Heart left ventricle (tissue), 16 donors: ENCODE measurements at regions of chr10 and their contacts with region 1.

Region 1: GRCh38 chr10:86936661-86937501 is 20.5 kb downstream of the MMRN2 start:
- DNase-seq: no peak
- ATAC-seq: no peak
- H3K4me3 ChIP-seq: no peak overlapping the region
- H3K27ac ChIP-seq: no peak overlapping the region
- H3K4me1 ChIP-seq: peaks cover 0 to 21% (median 0%) of the 10 kb centered on the region in 12 donors
- H3K27me3 ChIP-seq: no peaks in the 10 kb centered on the region
- CTCF ChIP-seq: no peak
- POLR2A ChIP-seq: no peak

Region 2: DNA sequence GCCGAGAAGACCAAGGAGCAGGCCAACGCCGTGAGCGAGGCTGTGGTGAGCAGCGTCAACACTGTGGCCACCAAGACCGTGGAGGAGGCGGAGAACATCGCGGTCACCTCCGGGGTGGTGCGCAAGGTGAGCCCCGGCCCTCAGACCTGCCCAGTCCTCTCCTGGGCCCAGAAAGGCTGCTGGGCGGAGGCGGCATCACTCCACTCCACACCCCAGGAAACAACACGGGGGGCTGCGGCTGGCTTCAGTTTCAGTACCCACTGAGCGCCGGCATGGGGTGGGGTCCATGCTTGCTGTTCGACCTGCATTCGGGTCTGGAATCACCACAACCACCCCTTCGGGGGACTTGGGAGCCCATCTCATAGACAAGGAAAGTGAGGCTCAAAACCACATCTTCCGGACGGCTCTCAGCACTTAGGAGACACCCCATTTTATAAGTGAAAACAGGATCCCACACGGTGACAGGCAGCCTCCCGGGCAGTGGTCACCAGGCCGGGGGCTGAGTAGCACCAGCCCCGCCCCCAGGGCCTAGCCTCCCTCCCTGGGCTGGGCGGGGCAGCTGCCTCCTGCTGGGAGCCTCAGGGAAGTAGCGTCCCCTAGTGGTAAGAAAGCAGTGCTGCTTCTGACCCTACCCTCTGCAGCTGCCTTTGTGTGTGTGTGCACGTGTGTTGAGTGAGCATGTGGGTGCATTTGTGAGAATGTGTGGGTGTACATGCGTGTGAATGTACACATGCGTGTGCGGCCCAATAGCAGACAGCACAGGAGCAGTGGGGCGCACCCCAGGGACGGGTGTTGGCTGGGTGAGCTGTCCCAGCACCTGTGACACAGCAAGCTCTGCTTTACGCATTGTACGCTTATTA is 23.4 kb after region 1 on chr10:
- intact Hi-C with region 1: loop called in 3 of 10 experiments (anchors 1 to 2 kb)
- DNase-seq: peak; percentile 60 to 70 (median 63)
- ATAC-seq: peak; percentile 17 to 66 (median 50)
- H3K4me3 ChIP-seq: peak overlapping the region in 11 of 12 donors; percentile 0 to 66 (median 58)
- H3K27ac ChIP-seq: peak overlapping the region; percentile 75 to 98 (median 90)
- H3K4me1 ChIP-seq: peaks cover 4 to 48% (median 36%) of the 10 kb centered on the region in 12 donors
- H3K27me3 ChIP-seq: no peaks in the 10 kb centered on the region
- CTCF ChIP-seq: peak; percentile 88 to 95 (median 92)
- POLR2A ChIP-seq: no peak

Region 3: GRCh38 chr10:86965986-86966654 is 29.2 kb after region 1 on chr10:
- intact Hi-C with region 1: loop called in 4 of 10 experiments (anchors 2 to 5 kb)
- DNase-seq: no peak
- ATAC-seq: no peak
- H3K4me3 ChIP-seq: peak overlapping the region in 7 of 12 donors; percentile 1 to 37 (median 17)
- H3K27ac ChIP-seq: peak overlapping the region in 8 of 12 donors; percentile 12 to 63 (median 42)
- H3K4me1 ChIP-seq: peaks cover 2 to 62% (median 39%) of the 10 kb centered on the region in 12 donors
- H3K27me3 ChIP-seq: peaks cover 0 to 11% (median 0%) of the 10 kb centered on the region in 9 donors
- CTCF ChIP-seq: no peak
- POLR2A ChIP-seq: no peak

Region 4: DNA sequence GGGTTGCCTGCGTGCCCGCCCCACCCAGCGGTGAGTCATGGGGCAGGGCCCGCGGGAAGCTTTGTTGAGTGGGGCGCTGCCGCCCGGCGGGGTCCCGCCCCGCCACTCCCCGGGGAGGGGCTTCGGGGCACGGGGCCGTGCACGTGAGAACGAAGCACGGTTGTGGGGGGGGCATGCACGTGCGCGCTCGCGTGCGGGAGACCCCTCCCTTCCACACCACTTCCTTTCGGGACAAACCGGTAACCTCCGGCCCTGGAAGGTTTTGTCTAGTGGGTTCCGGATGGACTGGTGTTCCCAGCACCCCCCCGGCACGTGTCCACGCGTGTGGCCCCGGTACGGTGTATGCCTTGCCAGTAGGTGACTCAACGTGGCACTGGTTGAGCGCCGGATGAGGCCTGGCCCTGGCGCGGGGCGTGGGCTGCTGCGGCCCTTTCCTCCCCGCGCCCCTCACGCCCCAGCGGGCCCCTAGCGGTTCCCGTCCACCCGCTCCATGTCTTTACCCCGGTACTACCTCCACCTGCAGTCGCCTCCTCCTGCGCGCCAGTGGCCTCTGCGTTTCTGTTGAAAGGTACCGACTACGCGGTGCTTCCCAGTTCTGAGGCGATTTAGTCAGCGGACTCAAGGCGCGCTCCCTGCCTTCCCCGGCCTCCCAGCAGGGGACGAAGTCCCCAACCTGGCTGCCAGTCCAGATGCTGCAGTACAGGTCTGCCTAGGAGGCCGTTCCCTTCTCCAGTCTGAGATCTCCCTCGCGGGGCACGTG is 34.5 kb after region 1 on chr10:
- intact Hi-C with region 1: loop called in 3 of 10 experiments (anchors 2 to 5 kb)
- DNase-seq: peak in 4 of 5 donors; percentile 90 to 92 (median 91)
- ATAC-seq: peak; percentile 44 to 87 (median 84)
- H3K4me3 ChIP-seq: peak overlapping the region; percentile 41 to 84 (median 65)
- H3K27ac ChIP-seq: peak overlapping the region; percentile 77 to 98 (median 92)
- H3K4me1 ChIP-seq: peaks cover 7 to 58% (median 42%) of the 10 kb centered on the region in 12 donors
- H3K27me3 ChIP-seq: peaks cover 0 to 11% (median 0%) of the 10 kb centered on the region in 9 donors
- CTCF ChIP-seq: peak in 1 of 12 donors; percentile 14
- POLR2A ChIP-seq: no peak